Activated CD4-positive, alpha-beta memory T cell treated with anti-CD3 and anti-CD28 coated beads, Interleukin-2, amount 10 ng/mL, durations not matched to agents 7 days and 5 days (primary cell): ENCODE measurements at regions of chr19 and their contacts with region 1.

Region 1: GRCh38 chr19:21851596-21852345 is 15.8 kb upstream of the ZNF43 start:
- DNase-seq: peak; percentile 89
- H3K4me3 Mint-ChIP-seq: peak overlapping the region; percentile 89
- H3K27ac Mint-ChIP-seq: peak overlapping the region; percentile 83
- H3K4me1 Mint-ChIP-seq: peaks cover 16% of the 10 kb centered on the region
- H3K27me3 Mint-ChIP-seq: no peaks in the 10 kb centered on the region

Region 2: DNA sequence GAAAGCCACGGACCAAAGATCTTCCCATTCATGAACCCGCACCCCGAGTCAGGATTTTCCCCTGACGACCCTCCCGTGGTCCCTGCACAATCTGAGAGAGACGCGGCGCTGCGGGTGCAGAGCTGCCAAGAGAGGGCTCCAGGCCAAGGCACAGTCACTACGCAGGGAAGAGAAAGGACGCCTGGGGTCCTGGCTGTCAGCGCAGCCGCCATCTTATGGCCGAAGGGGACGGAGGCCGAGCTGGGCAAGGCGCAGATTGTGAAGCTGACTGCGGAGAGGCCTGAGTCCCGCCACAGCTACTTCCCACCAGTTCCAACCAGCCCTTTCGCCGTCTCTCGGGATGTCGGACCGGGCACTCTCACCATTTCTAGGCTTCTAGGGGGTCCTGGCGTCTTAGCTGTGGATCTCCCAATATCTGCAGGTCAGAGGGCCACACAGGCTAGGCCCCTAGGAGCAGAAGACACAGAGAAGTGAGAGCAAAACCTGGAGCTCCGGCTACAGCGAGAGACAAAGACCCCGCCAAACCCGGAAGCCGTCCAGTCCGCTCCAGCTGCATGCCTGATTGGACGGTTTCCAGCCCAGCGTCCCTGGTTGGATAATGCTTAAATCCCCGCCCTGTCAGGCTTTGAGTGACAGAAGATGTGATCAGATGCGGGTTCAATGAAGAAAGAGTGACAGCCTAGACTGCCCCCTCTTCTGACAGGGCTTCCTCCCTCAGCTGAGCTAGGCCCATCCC is 84.5 kb before region 1 on chr19 and contains the start of gene ZNF100:
- CTCF ChIA-PET with region 1: interaction called, 9 read pairs
- POLR2A ChIA-PET with region 1: interaction called, 28 read pairs
- DNase-seq: peak; percentile 88
- H3K4me3 Mint-ChIP-seq: peak within 1 kb of the TSS; percentile 93
- H3K27ac Mint-ChIP-seq: peak within 1 kb of the TSS; percentile 80
- H3K4me1 Mint-ChIP-seq: peaks cover 18% of the 10 kb centered on the region
- H3K27me3 Mint-ChIP-seq: no peaks in the 10 kb centered on the region
- total RNA-seq, gene ZNF100: 18.9 to 19.5 TPM